PC-3 (cell line): ENCODE measurements at regions of chr6 and their contacts with region 1.

Region 1: GRCh38 chr6:21003780-21004541 is 469.7 kb downstream of the CDKAL1 start:
- DNase-seq: peak; percentile 93
- ATAC-seq: peak; percentile 68
- H3K4me3 ChIP-seq: peak overlapping the region; percentile 34; the same call in 1 of the 2 replicates
- H3K27ac ChIP-seq: peak overlapping the region; percentile 79
- H3K4me1 ChIP-seq: peaks cover 49% of the 10 kb centered on the region
- H3K27me3 ChIP-seq: no peaks in the 10 kb centered on the region
- CTCF ChIP-seq: no peak

Region 2: GRCh38 chr6:20919677-20920385 is 84.1 kb before region 1 on chr6:
- CTCF ChIA-PET with region 1: no interaction called
- POLR2A ChIA-PET with region 1: no interaction called
- intact Hi-C with region 1: loop called (anchors 5 kb)
- DNase-seq: peak; percentile 49
- ATAC-seq: peak; percentile 45
- H3K4me3 ChIP-seq: no peak overlapping the region
- H3K27ac ChIP-seq: peak overlapping the region; percentile 29; the same call in 1 of the 2 replicates
- H3K4me1 ChIP-seq: peaks cover 45% of the 10 kb centered on the region
- H3K27me3 ChIP-seq: no peaks in the 10 kb centered on the region
- CTCF ChIP-seq: no peak

Region 3: DNA sequence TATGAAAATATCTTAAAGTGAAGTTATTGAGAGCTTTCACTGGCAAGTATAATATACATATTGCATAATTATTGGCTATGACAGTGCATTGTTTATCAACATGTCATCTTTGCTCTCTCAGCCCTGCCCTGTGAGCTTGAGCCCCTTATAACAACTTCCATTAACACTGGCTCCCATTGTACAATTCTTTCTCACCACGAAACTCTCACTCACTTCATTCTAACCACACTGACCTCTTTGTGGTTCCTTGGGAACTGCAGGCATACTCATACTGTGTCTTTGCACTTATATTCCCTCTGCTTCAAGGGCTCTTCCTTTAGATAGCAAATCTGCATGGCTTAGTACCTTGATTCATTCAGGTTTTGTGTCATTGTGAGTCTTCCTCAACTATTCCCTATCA is 57.9 kb before region 1 on chr6:
- CTCF ChIA-PET with region 1: interaction called, 8 read pairs
- POLR2A ChIA-PET with region 1: no interaction called
- intact Hi-C with region 1: loop called (anchors 5 kb)
- DNase-seq: peak; percentile 58
- ATAC-seq: peak; percentile 43; the same call in 1 of the 2 replicates
- H3K4me3 ChIP-seq: no peak overlapping the region
- H3K27ac ChIP-seq: no peak overlapping the region
- H3K4me1 ChIP-seq: no peaks in the 10 kb centered on the region
- H3K27me3 ChIP-seq: no peaks in the 10 kb centered on the region
- CTCF ChIP-seq: peak; percentile 43